B cell (primary cell): ENCODE measurements at regions of chr3 and their contacts with region 1.

Region 1: DNA sequence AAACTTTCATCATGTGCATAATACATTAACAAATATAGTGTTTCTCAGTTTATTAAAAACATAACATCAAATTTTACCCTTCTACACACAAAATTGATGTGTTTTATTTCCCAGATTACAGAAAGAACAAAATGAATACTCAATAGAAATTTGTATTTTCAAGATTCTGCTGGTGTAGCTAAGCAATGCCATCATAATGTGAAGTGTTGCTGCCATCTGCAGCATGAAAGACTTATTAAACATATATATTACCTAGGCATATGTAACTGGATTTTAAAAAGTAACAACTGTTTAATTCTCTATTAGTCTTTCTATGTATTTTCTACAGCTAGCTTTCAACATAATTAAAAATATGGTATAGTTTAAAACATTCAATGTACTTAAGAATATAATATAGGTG is 27.5 kb downstream of the PLSCR5 start:
- DNase-seq: peak; percentile 60
- ATAC-seq: no peak
- H3K4me3 ChIP-seq: no peak overlapping the region
- H3K4me3 Mint-ChIP-seq: no peak overlapping the region
- H3K27ac ChIP-seq: no peak overlapping the region
- H3K27ac Mint-ChIP-seq: no peak overlapping the region
- H3K4me1 ChIP-seq: no peaks in the 10 kb centered on the region
- H3K4me1 Mint-ChIP-seq: no peaks in the 10 kb centered on the region
- H3K27me3 ChIP-seq: no peaks in the 10 kb centered on the region
- H3K27me3 Mint-ChIP-seq: no peaks in the 10 kb centered on the region
- CTCF ChIP-seq: peak; percentile 83

Region 2: GRCh38 chr3:146065573-146066006 is 512.1 kb before region 1 on chr3:
- CTCF ChIA-PET with region 1: interaction called, 9 read pairs
- POLR2A ChIA-PET with region 1: no interaction called
- intact Hi-C with region 1: loop called (anchors 1 kb)
- DNase-seq: peak; percentile 18
- ATAC-seq: no peak
- H3K4me3 ChIP-seq: no peak overlapping the region
- H3K4me3 Mint-ChIP-seq: no peak overlapping the region
- H3K27ac ChIP-seq: no peak overlapping the region
- H3K27ac Mint-ChIP-seq: no peak overlapping the region
- H3K4me1 ChIP-seq: no peaks in the 10 kb centered on the region
- H3K4me1 Mint-ChIP-seq: no peaks in the 10 kb centered on the region
- H3K27me3 ChIP-seq: no peaks in the 10 kb centered on the region
- H3K27me3 Mint-ChIP-seq: no peaks in the 10 kb centered on the region
- CTCF ChIP-seq: peak; percentile 87

Region 3: DNA sequence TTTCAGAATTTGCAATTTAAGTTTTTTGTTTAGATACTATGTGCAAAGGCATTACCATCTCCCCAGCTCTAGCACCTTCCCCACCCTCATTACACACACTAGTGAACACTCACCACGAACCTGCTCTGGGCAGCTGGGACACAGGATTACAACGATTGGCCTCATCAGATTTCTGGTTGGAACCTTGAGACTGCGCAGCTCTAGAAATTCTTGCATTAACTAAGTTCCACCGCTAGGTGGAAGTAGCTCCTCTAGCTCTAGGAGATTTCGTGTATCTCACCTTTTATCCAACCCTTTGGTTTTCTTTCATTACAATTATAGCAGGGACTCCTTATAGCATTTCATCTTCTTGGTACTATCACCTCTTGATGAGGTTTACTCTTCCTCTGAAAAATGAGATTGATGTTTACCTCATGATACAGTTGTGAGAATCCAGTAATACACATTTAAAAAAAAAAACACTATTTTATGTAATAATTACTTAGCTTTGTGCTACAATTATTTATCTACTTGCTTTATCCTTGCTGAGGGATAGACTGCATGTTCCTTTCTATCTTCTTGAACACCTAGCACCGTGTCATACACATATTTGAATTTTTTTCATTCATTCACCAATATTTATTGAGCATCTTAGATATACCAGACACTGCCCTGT is 388.0 kb before region 1 on chr3:
- CTCF ChIA-PET with region 1: interaction called, 70 read pairs
- POLR2A ChIA-PET with region 1: no interaction called
- intact Hi-C with region 1: loop called (anchors 1 kb)
- DNase-seq: peak; percentile 46
- ATAC-seq: peak; percentile 47
- H3K4me3 ChIP-seq: no peak overlapping the region
- H3K4me3 Mint-ChIP-seq: no peak overlapping the region
- H3K27ac ChIP-seq: no peak overlapping the region
- H3K27ac Mint-ChIP-seq: no peak overlapping the region
- H3K4me1 ChIP-seq: no peaks in the 10 kb centered on the region
- H3K4me1 Mint-ChIP-seq: no peaks in the 10 kb centered on the region
- H3K27me3 ChIP-seq: peaks cover 0 to 4% (median 0%) of the 10 kb centered on the region in 4 experiments
- H3K27me3 Mint-ChIP-seq: peaks cover 4% of the 10 kb centered on the region
- CTCF ChIP-seq: peak; percentile 84

Region 4: GRCh38 chr3:146218880-146219866 is 358.5 kb before region 1 on chr3:
- CTCF ChIA-PET with region 1: interaction called, 48 read pairs
- POLR2A ChIA-PET with region 1: no interaction called
- intact Hi-C with region 1: loop called (anchors 1 kb)
- DNase-seq: peak; percentile 48
- ATAC-seq: no peak
- H3K4me3 ChIP-seq: no peak overlapping the region
- H3K4me3 Mint-ChIP-seq: no peak overlapping the region
- H3K27ac ChIP-seq: no peak overlapping the region
- H3K27ac Mint-ChIP-seq: no peak overlapping the region
- H3K4me1 ChIP-seq: no peaks in the 10 kb centered on the region
- H3K4me1 Mint-ChIP-seq: no peaks in the 10 kb centered on the region
- H3K27me3 ChIP-seq: no peaks in the 10 kb centered on the region
- H3K27me3 Mint-ChIP-seq: peaks cover 6% of the 10 kb centered on the region
- CTCF ChIP-seq: peak; percentile 83

Region 5: DNA sequence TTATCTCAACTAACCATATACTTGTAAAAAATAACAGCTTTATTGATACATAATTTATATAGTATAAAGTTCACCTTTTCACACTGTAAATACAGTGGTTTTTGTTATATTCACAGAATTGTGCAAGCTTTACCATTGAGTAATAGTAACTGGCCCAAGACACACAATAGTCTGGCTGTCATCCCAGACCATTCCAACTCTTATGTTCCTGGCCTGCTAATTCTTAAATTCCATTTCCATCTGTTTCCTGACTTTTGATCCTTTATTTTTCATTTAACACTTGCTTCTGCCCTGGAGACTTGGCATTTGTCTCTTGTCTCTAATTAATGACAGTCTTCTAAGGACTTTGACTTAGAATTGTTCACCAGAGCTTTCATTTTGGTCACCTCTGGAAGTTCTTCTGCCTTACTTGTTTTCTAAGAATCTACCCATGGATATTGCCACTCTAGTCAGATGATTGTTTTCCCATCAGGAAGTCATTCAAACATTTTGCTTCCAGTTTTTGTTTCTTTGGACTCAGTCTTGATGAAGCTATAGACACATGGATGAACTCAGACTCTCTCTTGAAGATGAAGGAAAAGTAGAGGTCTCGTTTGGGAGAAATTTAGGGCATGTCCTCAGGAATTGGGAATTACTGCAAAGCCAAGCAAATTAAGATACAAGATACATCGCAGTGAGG is 299.6 kb before region 1 on chr3:
- CTCF ChIA-PET with region 1: no interaction called
- POLR2A ChIA-PET with region 1: no interaction called
- intact Hi-C with region 1: no loop called
- DNase-seq: no peak
- ATAC-seq: no peak
- H3K4me3 ChIP-seq: no peak overlapping the region
- H3K4me3 Mint-ChIP-seq: no peak overlapping the region
- H3K27ac ChIP-seq: no peak overlapping the region
- H3K27ac Mint-ChIP-seq: no peak overlapping the region
- H3K4me1 ChIP-seq: no peaks in the 10 kb centered on the region
- H3K4me1 Mint-ChIP-seq: no peaks in the 10 kb centered on the region
- H3K27me3 ChIP-seq: no peaks in the 10 kb centered on the region
- H3K27me3 Mint-ChIP-seq: no peaks in the 10 kb centered on the region
- CTCF ChIP-seq: no peak

Region 6: DNA sequence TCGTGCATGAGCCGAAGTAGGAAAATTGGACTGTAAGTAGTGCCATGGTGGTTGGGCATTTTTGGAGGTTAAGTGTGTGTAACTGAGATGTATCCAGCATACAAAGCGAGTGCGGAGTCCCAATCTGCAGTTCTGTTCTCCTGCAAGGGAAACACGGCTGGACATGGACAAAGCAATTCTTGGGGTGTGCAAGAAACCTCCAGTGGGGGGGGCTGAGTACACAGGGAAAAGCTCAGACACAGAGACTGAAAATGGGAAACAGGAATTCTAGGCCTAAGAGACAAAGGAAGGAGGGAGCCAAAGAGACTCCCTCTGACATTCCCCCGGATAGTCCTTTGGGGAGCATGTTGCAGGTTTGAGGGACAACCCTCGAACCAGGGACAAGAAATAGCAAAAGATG is 243.5 kb before region 1 on chr3:
- CTCF ChIA-PET with region 1: no interaction called
- POLR2A ChIA-PET with region 1: no interaction called
- intact Hi-C with region 1: loop called (anchors 1 kb)
- DNase-seq: no peak
- ATAC-seq: no peak
- H3K4me3 ChIP-seq: no peak overlapping the region
- H3K4me3 Mint-ChIP-seq: no peak overlapping the region
- H3K27ac ChIP-seq: no peak overlapping the region
- H3K27ac Mint-ChIP-seq: no peak overlapping the region
- H3K4me1 ChIP-seq: no peaks in the 10 kb centered on the region
- H3K4me1 Mint-ChIP-seq: no peaks in the 10 kb centered on the region
- H3K27me3 ChIP-seq: no peaks in the 10 kb centered on the region
- H3K27me3 Mint-ChIP-seq: no peaks in the 10 kb centered on the region
- CTCF ChIP-seq: no peak

Region 7: GRCh38 chr3:146431240-146431639 is 146.4 kb before region 1 on chr3:
- CTCF ChIA-PET with region 1: no interaction called
- POLR2A ChIA-PET with region 1: no interaction called
- intact Hi-C with region 1: no loop called
- DNase-seq: no peak
- ATAC-seq: no peak
- H3K4me3 ChIP-seq: no peak overlapping the region
- H3K4me3 Mint-ChIP-seq: no peak overlapping the region
- H3K27ac ChIP-seq: no peak overlapping the region
- H3K27ac Mint-ChIP-seq: no peak overlapping the region
- H3K4me1 ChIP-seq: no peaks in the 10 kb centered on the region
- H3K4me1 Mint-ChIP-seq: no peaks in the 10 kb centered on the region
- H3K27me3 ChIP-seq: peaks cover 0 to 5% (median 0%) of the 10 kb centered on the region in 4 experiments
- H3K27me3 Mint-ChIP-seq: peaks cover 14% of the 10 kb centered on the region
- CTCF ChIP-seq: no peak

Region 8: GRCh38 chr3:146589899-146590508 is 12.3 kb after region 1 on chr3:
- CTCF ChIA-PET with region 1: interaction called, 13 read pairs
- POLR2A ChIA-PET with region 1: no interaction called
- intact Hi-C with region 1: no loop called
- DNase-seq: peak; percentile 10
- ATAC-seq: no peak
- H3K4me3 ChIP-seq: no peak overlapping the region
- H3K4me3 Mint-ChIP-seq: no peak overlapping the region
- H3K27ac ChIP-seq: no peak overlapping the region
- H3K27ac Mint-ChIP-seq: no peak overlapping the region
- H3K4me1 ChIP-seq: no peaks in the 10 kb centered on the region
- H3K4me1 Mint-ChIP-seq: no peaks in the 10 kb centered on the region
- H3K27me3 ChIP-seq: peaks cover 0 to 2% (median 0%) of the 10 kb centered on the region in 4 experiments
- H3K27me3 Mint-ChIP-seq: peaks cover 8% of the 10 kb centered on the region
- CTCF ChIP-seq: peak; percentile 60